Activated CD8-positive, alpha-beta T cell treated with anti-CD3 and anti-CD28 coated beads for 36 hours (primary cell): ENCODE measurements at regions of chr10 and their contacts with region 1.

Region 1: GRCh38 chr10:73529089-73529832 is 33.4 kb upstream of the PPP3CB start:
- DNase-seq: peak; percentile 62
- ATAC-seq: peak; percentile 93
- H3K4me3 Mint-ChIP-seq: no peak overlapping the region
- H3K27ac Mint-ChIP-seq: no peak overlapping the region
- H3K4me1 Mint-ChIP-seq: no peaks in the 10 kb centered on the region
- H3K27me3 Mint-ChIP-seq: no peaks in the 10 kb centered on the region
- CTCF ChIP-seq: peak; percentile 92

Region 2: DNA sequence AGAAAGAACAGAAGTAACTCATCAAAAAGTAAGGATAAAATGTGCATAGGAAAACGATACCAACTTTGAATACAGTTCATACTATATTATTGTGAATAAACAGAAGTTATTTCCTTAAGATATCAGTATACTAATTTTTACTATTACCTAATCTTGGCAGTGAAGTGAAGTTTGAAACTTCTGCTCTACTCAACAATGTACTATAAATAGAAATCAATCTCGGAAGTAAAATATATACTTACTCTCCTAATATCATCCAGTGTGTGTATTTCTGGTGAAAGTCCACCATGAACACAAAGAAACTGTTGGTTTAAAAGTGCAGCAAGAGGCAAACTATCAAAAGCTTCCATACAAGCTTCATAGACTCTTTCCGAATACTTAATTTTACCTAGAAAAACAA is 58.0 kb before region 1 on chr10:
- CTCF ChIA-PET with region 1: no interaction called
- POLR2A ChIA-PET with region 1: no interaction called
- intact Hi-C with region 1: no loop called
- DNase-seq: no peak
- ATAC-seq: no peak
- H3K4me3 Mint-ChIP-seq: no peak overlapping the region
- H3K27ac Mint-ChIP-seq: no peak overlapping the region
- H3K4me1 Mint-ChIP-seq: peaks cover 3% of the 10 kb centered on the region
- H3K27me3 Mint-ChIP-seq: no peaks in the 10 kb centered on the region
- CTCF ChIP-seq: no peak

Region 3: GRCh38 chr10:73517271-73517877 is 11.9 kb before region 1 on chr10:
- CTCF ChIA-PET with region 1: interaction called, 16 read pairs
- POLR2A ChIA-PET with region 1: no interaction called
- intact Hi-C with region 1: no loop called
- DNase-seq: no peak
- ATAC-seq: no peak
- H3K4me3 Mint-ChIP-seq: no peak overlapping the region
- H3K27ac Mint-ChIP-seq: no peak overlapping the region
- H3K4me1 Mint-ChIP-seq: no peaks in the 10 kb centered on the region
- H3K27me3 Mint-ChIP-seq: no peaks in the 10 kb centered on the region
- CTCF ChIP-seq: no peak

Region 4: DNA sequence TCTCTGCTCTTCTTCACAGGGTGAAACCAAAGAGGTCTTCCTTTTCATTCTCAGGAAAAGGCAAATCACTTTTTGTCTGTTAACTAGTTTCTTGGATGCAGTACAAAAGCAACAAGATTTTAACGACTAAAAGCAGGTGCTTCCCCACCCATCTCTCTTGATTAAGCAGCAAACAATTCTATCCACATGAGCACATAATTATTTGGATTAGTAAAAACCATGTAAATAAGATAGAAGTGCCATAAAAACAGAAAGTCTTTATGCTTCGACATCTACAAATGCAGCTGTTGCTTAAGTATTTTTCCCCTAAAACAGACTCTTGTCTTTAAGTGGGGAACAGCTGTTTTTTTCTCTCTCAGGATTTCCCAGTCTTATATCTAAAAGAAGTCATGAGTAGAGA is 24.5 kb after region 1 on chr10:
- CTCF ChIA-PET with region 1: interaction called, 10 read pairs
- POLR2A ChIA-PET with region 1: no interaction called
- intact Hi-C with region 1: no loop called
- DNase-seq: no peak
- ATAC-seq: no peak
- H3K4me3 Mint-ChIP-seq: no peak overlapping the region
- H3K27ac Mint-ChIP-seq: no peak overlapping the region
- H3K4me1 Mint-ChIP-seq: no peaks in the 10 kb centered on the region
- H3K27me3 Mint-ChIP-seq: no peaks in the 10 kb centered on the region
- CTCF ChIP-seq: no peak

Region 5: DNA sequence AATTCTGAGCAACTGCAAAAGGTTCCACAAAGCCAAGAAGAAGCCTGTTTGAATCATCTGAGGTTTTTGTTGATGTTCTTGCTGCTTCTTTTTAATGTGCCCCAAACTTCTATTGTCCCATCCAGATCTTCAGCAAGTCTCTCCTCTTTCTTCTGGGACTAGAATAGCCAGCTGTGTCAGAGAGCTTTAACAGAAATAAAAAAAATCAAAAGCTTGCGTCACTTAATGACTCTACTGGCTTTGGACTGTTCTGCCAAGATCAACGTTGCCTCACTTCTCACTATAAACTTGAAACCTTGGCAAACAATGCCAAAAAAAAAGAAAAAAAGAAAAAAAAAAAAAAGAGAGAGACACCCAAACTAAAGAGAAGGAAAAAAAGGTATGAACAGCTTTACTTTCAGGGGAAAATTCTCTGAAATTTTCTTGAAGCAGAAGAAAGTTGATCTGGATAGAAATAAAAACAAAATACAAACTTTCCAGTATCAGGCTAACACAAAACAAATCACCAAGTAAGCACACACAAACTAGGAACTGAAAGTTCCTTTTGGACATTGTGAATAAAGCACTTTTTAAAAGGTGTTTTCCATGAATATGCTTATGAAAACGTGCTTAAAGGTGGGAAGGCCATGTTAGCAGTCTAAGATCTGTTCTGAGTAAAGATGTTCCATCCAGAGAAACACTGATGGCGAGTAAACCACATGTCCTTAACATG is 47.1 kb after region 1 on chr10:
- CTCF ChIA-PET with region 1: interaction called, 11 read pairs
- POLR2A ChIA-PET with region 1: no interaction called
- intact Hi-C with region 1: no loop called
- DNase-seq: no peak
- ATAC-seq: no peak
- H3K4me3 Mint-ChIP-seq: no peak overlapping the region
- H3K27ac Mint-ChIP-seq: no peak overlapping the region
- H3K4me1 Mint-ChIP-seq: no peaks in the 10 kb centered on the region
- H3K27me3 Mint-ChIP-seq: no peaks in the 10 kb centered on the region
- CTCF ChIP-seq: no peak

Region 6: DNA sequence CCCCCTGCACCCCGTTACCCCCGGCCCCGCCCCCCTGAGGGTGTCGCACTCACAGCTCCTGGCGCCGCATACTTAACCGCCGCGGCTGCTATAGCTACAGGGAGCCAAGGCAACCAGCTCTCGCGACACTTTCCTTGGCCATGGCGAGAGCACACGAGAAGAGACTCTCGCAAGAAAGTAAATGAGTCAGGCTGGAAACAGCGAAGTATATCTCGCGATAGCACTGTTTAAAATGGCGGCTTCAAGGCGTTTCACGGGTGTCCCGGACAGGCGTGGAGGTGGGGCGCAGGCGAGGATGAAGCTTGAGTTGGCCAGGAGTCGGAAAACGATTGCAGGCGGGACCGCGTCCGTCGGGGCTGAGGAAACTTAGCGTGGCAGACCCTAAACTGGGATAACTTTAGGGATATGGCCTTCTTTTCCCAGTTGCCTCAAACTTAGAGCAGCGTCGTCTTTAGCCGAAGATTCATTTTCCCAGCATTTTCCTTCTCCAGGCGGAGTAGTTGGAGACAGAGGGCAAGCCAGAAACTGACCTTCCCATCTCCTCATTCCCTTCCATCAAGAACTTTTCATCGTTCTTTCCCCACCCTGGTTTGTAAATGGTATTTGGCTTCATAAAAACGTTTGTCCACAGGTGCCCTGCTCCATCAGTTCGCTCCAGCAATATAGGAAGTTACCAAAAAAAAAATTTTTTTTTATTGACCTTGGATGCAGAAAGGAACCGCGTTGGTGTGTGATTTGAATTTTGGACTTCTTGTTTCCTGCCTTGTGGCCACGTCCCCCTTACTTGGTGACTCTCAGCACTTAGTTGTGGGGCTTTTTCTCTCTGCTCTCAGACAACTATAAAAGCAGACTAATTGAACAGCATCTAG is 96.9 kb after region 1 on chr10:
- CTCF ChIA-PET with region 1: interaction called, 20 read pairs
- POLR2A ChIA-PET with region 1: no interaction called
- intact Hi-C with region 1: no loop called
- DNase-seq: peak; percentile 98
- ATAC-seq: peak; percentile 98
- H3K4me3 Mint-ChIP-seq: peak overlapping the region; percentile 93
- H3K27ac Mint-ChIP-seq: peak overlapping the region; percentile 98
- H3K4me1 Mint-ChIP-seq: peaks cover 16% of the 10 kb centered on the region
- H3K27me3 Mint-ChIP-seq: no peaks in the 10 kb centered on the region
- CTCF ChIP-seq: no peak

Region 7: DNA sequence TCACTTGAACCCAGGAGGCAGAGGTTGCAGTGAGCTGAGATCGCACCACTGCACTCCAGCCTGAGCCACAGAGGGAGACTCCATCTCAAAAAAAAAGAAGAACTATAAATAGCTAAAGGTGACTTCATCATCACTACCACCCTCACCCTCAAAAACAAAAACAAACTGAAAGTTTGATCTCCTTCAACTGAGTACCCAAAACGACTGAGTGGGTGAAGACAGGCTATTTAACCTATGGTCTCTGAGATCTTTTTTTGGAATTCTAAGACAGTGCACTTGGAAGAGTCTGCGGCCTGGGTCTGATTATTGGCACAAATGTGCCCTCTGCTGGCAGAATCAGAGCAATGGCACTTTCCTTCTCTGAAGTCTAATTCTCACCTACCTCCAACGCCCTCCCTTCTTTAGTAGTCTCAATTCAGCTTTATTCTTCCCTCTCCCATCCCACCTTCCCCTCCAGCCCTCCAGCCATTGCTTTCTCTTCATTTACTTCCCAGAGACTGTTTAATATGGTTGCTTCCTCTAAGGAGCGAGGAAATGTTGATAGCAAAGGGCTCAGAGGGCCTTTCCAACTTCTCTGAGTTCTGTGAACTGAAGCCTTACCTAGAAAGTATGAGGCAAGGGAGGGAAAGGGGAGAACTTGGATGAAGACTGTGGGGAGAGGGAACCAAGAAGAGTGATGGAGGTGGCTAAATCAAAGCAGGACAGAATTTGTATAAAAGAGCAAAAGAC is 114.9 kb after region 1 on chr10:
- CTCF ChIA-PET with region 1: interaction called, 143 read pairs
- POLR2A ChIA-PET with region 1: interaction called, 3 read pairs
- intact Hi-C with region 1: loop called (anchors 1 kb)
- DNase-seq: peak; percentile 55
- ATAC-seq: peak; percentile 77
- H3K4me3 Mint-ChIP-seq: no peak overlapping the region
- H3K27ac Mint-ChIP-seq: peak overlapping the region; percentile 8
- H3K4me1 Mint-ChIP-seq: peaks cover 15% of the 10 kb centered on the region
- H3K27me3 Mint-ChIP-seq: no peaks in the 10 kb centered on the region
- CTCF ChIP-seq: peak; percentile 98

Region 8: DNA sequence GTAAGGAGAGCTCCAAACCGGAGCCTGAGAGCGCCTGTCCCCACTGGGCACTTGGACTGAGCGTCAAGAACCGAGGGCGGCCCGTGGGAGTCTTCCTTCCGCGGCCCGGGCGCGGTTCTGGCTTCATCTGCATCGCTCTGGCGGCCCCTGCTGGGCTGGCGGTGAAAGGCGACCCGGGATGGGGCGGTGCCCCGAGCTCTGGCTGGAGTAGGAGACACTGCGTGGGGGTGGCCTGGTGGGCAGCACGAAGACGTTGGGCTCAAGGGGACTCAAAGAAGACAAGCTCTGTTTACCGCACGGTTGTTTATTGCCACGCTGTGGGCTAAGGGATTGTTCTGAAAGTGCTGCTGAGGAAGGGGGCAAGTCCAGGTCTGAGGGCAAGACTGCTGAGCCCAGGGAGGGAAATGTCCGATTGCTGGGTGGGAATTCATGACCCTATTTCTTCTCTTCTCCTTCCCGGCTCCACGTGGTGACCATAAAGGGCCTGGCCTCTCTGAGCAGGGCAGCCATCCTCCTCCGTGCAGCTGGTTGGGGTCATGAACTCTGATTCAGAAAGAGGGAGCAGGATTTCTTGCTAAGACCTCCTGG is 411.5 kb after region 1 on chr10:
- CTCF ChIA-PET with region 1: no interaction called
- POLR2A ChIA-PET with region 1: no interaction called
- intact Hi-C with region 1: no loop called
- DNase-seq: peak; percentile 88
- ATAC-seq: peak; percentile 99
- H3K4me3 Mint-ChIP-seq: no peak overlapping the region
- H3K27ac Mint-ChIP-seq: no peak overlapping the region
- H3K4me1 Mint-ChIP-seq: peaks cover 5% of the 10 kb centered on the region
- H3K27me3 Mint-ChIP-seq: peaks cover 9% of the 10 kb centered on the region
- CTCF ChIP-seq: peak; percentile 99